Testis (tissue), 5 donors: ENCODE measurements at regions of chr1 and their contacts with region 1.

Region 1: GRCh38 chr1:205528887-205529825 is 24.7 kb downstream of the CDK18 start:
- DNase-seq: peak; percentile 90
- H3K4me3 ChIP-seq: peak overlapping the region; percentile 42 to 44
- H3K27ac ChIP-seq: no peak overlapping the region
- H3K4me1 ChIP-seq: no peaks in the 10 kb centered on the region
- H3K27me3 ChIP-seq: no peaks in the 10 kb centered on the region
- CTCF ChIP-seq: peak; percentile 91 to 97 (median 91)
- POLR2A ChIP-seq: no peak

Region 2: GRCh38 chr1:204902671-204903070 is 626.5 kb before region 1 on chr1:
- intact Hi-C with region 1: no loop called
- DNase-seq: no peak
- H3K4me3 ChIP-seq: no peak overlapping the region
- H3K27ac ChIP-seq: no peak overlapping the region
- H3K4me1 ChIP-seq: no peaks in the 10 kb centered on the region
- H3K27me3 ChIP-seq: no peaks in the 10 kb centered on the region
- CTCF ChIP-seq: no peak
- POLR2A ChIP-seq: no peak

Region 3: GRCh38 chr1:205658943-205659581 is 129.9 kb after region 1 on chr1:
- intact Hi-C with region 1: loop called (anchors 10 kb)
- DNase-seq: peak; percentile 90
- H3K4me3 ChIP-seq: no peak overlapping the region
- H3K27ac ChIP-seq: no peak overlapping the region
- H3K4me1 ChIP-seq: peaks cover 8% of the 10 kb centered on the region
- H3K27me3 ChIP-seq: no peaks in the 10 kb centered on the region
- CTCF ChIP-seq: peak; percentile 69 to 89 (median 82)
- POLR2A ChIP-seq: no peak